ENCODE measurements at regions of chr10 and their contacts with region 1.

Region 1: DNA sequence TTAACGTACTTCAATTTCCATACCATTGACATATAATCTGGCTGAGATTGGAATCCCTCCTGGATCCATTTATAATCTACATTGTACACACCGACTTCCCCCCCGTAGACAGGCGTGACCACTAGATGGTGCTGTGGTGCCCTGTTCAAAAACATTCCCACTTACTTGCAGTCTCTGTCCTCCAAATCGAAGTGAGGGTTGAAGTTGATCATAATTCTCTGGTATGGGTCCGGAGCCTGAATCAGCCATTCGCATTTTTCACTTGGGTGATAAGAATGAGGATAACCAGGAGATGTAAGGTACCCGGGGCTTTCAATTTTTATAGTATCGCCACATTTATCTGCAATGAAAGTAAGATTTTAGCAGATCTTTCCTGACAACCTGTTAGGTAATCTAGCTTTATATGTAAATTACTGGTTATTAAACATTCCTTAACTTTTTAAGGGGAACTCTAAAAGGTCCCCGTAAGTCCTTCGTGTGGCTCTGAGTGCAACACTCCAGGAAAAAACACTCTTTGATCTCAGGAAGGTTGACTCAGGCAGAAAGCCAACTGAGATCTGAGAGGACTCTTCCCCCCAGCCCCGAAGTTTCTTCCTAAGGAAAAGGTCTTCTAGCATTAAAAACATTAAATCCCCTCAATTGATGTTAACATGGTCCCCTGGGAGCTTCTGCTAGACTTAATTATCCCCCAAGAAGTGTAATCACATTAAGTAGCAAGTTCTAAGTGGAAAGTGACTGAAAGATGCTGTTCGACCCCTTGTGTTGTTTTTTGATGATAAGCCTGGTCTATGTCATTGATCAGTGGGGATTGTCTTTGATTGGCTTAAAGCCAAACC is 3.7 kb downstream of the NRP1 start:
- DNase-seq: peak; percentile 54 to 79
- H3K4me3 ChIP-seq: peak overlapping the region; percentile 92
- H3K27ac ChIP-seq: peak overlapping the region; percentile 28; the same call in 1 of the 2 replicates
- H3K4me1 ChIP-seq: peaks cover 55% of the 10 kb centered on the region
- H3K27me3 ChIP-seq: no peaks in the 10 kb centered on the region
- CTCF ChIP-seq: peak; percentile 80

Region 2: DNA sequence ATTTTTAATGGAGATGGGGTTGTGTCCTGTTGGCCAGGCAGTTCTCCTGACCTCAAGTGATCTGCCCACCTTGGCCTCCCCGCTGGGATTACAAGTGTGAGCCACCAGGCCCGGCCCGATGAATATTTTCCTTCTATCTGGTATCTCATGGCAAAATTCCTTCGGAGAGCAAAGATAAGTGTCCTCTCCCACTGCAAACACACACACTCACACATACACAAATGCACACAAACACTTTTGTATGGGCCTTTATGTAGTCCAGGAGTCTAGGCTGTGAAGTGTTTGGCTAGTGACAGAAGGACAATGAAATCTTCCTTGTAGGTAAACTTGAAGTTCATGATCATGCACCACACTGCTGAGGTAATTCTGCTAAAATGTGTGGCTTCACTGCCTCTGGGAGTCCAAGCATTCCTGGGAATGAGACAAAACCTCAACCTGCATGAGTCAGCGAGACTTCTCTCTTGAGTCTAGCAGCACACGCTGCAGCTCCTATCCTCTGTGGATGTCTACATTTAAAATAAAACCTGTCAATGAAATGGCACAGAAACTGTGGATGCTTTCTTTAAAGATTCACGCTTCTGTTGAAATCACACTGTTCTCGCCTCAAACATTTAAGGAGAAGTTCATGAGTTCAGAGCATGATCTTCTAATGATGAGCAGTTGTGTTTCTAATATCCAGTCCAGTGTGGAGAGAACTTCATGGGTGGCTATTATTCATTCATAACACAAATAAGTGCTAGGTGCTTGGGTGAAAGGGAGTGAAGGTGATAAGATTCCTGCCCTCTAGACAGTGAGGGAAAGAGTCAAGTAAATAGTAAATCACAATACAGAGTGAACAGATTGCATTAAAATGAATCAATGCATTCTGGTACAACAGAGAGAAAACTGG is 92.8 kb before region 1 on chr10:
- CTCF ChIA-PET with region 1: no interaction called
- POLR2A ChIA-PET with region 1: no interaction called
- intact Hi-C with region 1: loop called (anchors 2 kb)
- DNase-seq: peak; percentile 72 to 94
- H3K4me3 ChIP-seq: no peak overlapping the region
- H3K27ac ChIP-seq: peak overlapping the region; percentile 89
- H3K4me1 ChIP-seq: peaks cover 56% of the 10 kb centered on the region
- H3K27me3 ChIP-seq: no peaks in the 10 kb centered on the region
- CTCF ChIP-seq: no peak

Region 3: DNA sequence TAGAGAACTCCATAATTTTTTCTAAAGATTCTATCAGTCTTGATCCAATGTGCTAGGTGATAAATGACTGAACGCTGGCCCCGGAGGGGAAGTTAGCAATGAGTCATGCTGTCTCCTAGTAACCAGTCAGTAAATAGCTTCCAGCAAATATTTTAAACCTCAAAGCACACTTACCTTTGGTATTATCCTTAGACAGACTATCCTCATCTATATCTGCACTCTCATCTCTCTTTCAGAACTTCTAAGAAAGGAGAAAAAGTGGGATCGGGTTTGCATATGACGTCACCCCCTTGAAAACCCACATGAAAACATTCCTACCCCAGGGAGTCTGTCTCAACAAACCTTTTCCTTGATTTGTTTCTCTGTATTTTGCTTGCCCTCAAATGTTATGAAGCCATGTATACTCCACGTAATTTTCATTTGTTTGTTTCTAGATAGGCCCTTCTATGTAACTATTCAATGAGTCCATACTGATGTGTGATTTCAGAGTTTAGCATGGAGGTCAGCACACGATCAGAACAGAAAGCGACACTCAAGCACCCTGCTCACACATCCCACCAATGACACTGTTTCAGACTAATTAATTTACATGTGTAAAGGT is 178.6 kb after region 1 on chr10:
- CTCF ChIA-PET with region 1: no interaction called
- POLR2A ChIA-PET with region 1: no interaction called
- intact Hi-C with region 1: loop called (anchors 5 kb)
- DNase-seq: peak; percentile 85 to 93
- H3K4me3 ChIP-seq: peak overlapping the region; percentile 21; the same call in 1 of the 2 replicates
- H3K27ac ChIP-seq: peak overlapping the region; percentile 43
- H3K4me1 ChIP-seq: peaks cover 24% of the 10 kb centered on the region
- H3K27me3 ChIP-seq: no peaks in the 10 kb centered on the region
- CTCF ChIP-seq: no peak

Region 4: GRCh38 chr10:33801748-33802147 is 471.0 kb after region 1 on chr10:
- CTCF ChIA-PET with region 1: no interaction called
- POLR2A ChIA-PET with region 1: no interaction called
- intact Hi-C with region 1: loop called (anchors 5 kb)
- DNase-seq: peak; percentile 54 to 80
- H3K4me3 ChIP-seq: no peak overlapping the region
- H3K27ac ChIP-seq: no peak overlapping the region
- H3K4me1 ChIP-seq: peaks cover 14% of the 10 kb centered on the region
- H3K27me3 ChIP-seq: no peaks in the 10 kb centered on the region
- CTCF ChIP-seq: no peak

Region 5: DNA sequence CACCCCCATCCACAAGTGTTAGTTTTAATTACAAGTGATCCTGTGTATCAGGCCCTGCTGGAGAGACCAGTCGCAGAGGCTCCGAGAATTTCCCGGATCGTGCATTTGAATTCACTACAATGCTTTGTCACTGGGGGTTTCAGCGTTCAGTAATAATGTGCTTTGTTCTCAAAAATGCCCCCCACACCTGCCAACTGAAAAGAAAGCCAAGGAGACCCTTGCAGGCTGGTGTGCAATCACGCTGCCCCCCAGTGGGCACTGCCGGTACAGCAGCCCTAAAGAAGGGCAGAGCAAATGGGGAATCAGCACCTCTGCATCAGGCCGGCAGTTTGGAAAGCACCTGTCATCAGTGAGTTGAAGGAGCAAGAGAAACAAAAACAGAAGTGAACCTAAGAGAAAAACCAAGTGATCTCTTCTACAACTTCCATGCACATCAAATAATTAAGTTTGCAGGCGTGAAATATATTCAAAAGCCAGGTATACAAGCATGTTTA is 1306.7 kb after region 1 on chr10:
- CTCF ChIA-PET with region 1: interaction called, 7 read pairs
- POLR2A ChIA-PET with region 1: no interaction called
- intact Hi-C with region 1: loop called (anchors 1 kb)
- DNase-seq: peak in 1 of 2 experiments; percentile 56
- H3K4me3 ChIP-seq: no peak overlapping the region
- H3K27ac ChIP-seq: no peak overlapping the region
- H3K4me1 ChIP-seq: peaks cover 5% of the 10 kb centered on the region; the same call in 1 of the 2 replicates
- H3K27me3 ChIP-seq: no peaks in the 10 kb centered on the region
- CTCF ChIP-seq: peak; percentile 94

Measured in PC-9 (cell line).